ENCODE measurements at regions of chr2 and their contacts with region 1.

Region 1: GRCh38 chr2:20097879-20098714 is 46.7 kb upstream of the LAPTM4A start:
- DNase-seq: peak; percentile 74 to 77 (median 75)
- H3K4me3 ChIP-seq: no peak overlapping the region
- H3K4me3 Mint-ChIP-seq: no peak overlapping the region
- H3K27ac ChIP-seq: no peak overlapping the region
- H3K27ac Mint-ChIP-seq: no peak overlapping the region
- H3K4me1 ChIP-seq: no peaks in the 10 kb centered on the region
- H3K4me1 Mint-ChIP-seq: peaks cover 3% of the 10 kb centered on the region
- H3K27me3 ChIP-seq: no peaks in the 10 kb centered on the region
- H3K27me3 Mint-ChIP-seq: peaks cover 6 to 9% (median 8%) of the 10 kb centered on the region in 3 donors
- CTCF ChIP-seq: peak; percentile 90

Region 2: GRCh38 chr2:19955544-19956422 is 142.3 kb before region 1 on chr2:
- intact Hi-C with region 1: loop called (anchors 5 kb)
- DNase-seq: peak; percentile 33 to 54 (median 50)
- H3K4me3 ChIP-seq: no peak overlapping the region
- H3K4me3 Mint-ChIP-seq: no peak overlapping the region
- H3K27ac ChIP-seq: no peak overlapping the region
- H3K27ac Mint-ChIP-seq: peak overlapping the region in 1 of 7 donors; percentile 33
- H3K4me1 ChIP-seq: no peaks in the 10 kb centered on the region
- H3K4me1 Mint-ChIP-seq: no peaks in the 10 kb centered on the region
- H3K27me3 ChIP-seq: no peaks in the 10 kb centered on the region
- H3K27me3 Mint-ChIP-seq: peaks cover 0 to 2% (median 0%) of the 10 kb centered on the region in 3 donors
- CTCF ChIP-seq: peak; percentile 86

Region 3: GRCh38 chr2:20015472-20016083 is 82.5 kb before region 1 on chr2:
- intact Hi-C with region 1: loop called (anchors 1 to 5 kb)
- DNase-seq: peak; percentile 18 to 33 (median 31)
- H3K4me3 ChIP-seq: no peak overlapping the region
- H3K4me3 Mint-ChIP-seq: no peak overlapping the region
- H3K27ac ChIP-seq: no peak overlapping the region
- H3K27ac Mint-ChIP-seq: no peak overlapping the region
- H3K4me1 ChIP-seq: peaks cover 7 to 13% of the 10 kb centered on the region in 2 donors
- H3K4me1 Mint-ChIP-seq: peaks cover 12% of the 10 kb centered on the region
- H3K27me3 ChIP-seq: peaks cover 38 to 40% of the 10 kb centered on the region in 2 donors
- H3K27me3 Mint-ChIP-seq: peaks cover 30 to 42% (median 37%) of the 10 kb centered on the region in 3 donors
- CTCF ChIP-seq: peak; percentile 72

Measured in CD14-positive monocyte (primary cell).